Sciatic nerve (tissue), 2 donors: ENCODE measurements at regions of chr3 and their contacts with region 1.

Region 1: GRCh38 chr3:68876112-68876713 is 56.1 kb downstream of the TAFA4 start:
- DNase-seq: no peak
- ATAC-seq: peak; percentile 53

Region 2: DNA sequence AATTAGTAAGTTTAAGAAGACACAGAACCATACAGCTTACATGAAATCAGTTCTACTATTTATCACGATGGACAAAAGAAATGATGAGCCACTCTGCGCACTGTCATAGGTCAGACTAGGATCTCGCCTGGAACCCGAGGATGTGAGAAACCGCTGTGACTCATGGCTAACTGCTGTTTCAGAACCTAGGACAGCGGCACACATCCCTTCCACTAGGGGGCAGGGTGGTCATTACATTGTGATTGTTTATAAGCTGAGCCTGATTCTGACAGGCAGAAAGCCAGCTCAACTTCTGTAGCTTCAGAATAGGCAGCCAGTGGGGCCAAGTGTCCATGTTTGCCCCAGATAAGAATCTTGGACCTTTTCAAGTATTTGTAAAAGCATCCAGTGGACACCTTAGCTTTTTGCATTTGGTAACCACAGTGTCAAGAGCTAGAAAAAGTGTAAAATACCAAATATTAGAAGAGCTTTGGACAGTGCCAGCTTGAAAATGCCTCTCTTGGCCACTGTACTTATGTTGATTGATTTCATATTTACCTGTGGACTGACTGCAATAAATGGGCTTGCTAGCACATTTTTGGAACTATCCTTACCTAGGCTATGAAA is 1762.3 kb before region 1 on chr3:
- intact Hi-C with region 1: loop called (anchors 10 kb)
- DNase-seq: peak; percentile 81
- ATAC-seq: peak; percentile 64

Region 3: GRCh38 chr3:68648494-68648893 is 227.7 kb before region 1 on chr3:
- intact Hi-C with region 1: no loop called
- DNase-seq: no peak
- ATAC-seq: no peak

Region 4: DNA sequence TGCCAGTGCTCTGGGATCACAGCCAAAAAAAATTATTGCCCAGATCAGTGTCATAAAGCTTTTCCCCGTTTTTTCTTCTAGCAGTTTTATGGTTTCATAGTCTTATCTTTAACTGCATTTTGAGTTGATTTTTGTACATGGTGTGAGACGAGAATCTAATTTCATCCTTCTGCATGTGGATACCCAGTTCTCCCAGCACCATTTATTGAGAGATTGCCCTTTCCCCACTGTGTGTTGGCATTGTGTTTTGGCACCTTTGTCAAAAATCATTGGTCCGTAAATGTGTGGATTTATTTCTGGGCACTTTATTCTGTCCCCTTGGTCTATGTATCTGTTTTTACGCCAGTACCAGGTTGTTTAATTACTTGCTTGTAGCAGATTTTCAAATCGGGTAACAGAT is 66.6 kb before region 1 on chr3:
- intact Hi-C with region 1: no loop called
- DNase-seq: no peak
- ATAC-seq: no peak